Activated CD4-positive, alpha-beta memory T cell treated with anti-CD3 and anti-CD28 coated beads, Interleukin-2, amount 10 ng/mL, durations not matched to agents 7 days and 5 days (primary cell): ENCODE measurements at regions of chr6 and their contacts with region 1.

Region 1: DNA sequence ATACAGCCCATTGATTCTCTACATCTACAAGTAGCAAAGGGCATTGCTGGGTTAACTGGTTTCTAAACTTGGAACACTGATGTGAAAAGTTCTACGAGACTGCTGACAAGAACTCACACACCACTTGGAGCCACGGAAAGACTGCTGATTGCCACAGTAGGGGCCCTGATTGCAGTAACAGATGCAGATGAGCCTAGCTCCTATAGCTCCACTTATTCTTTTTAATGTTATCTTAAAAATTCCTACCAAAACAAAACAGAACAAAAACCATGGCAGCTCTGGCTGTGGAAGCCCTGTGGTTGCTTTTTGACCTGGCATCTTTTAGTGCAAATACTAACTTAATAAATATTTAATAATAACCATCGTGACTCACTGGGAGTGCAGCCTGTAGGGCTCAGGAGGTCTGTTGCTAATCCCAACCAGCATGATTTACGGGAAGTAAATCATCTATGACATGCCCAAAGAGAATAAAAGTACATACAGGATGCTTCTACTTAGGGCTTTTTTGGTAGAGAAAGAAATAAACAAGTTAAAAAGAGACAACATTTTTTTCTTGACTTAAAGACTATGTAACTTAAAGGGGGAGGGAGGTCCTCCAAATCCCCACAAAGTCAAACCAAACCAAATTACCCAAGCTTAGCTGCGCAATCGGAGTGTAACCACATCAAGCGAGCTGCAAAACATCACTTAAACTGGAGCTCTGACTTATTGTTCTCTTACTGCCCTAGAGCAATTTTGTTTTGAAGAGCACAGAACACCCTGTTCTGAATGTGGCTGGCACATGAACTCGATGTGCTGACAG is 87.2 kb downstream of the FKBP5 start:
- DNase-seq: peak; percentile 58
- H3K4me3 Mint-ChIP-seq: peak overlapping the region; percentile 60
- H3K27ac Mint-ChIP-seq: peak overlapping the region; percentile 91
- H3K4me1 Mint-ChIP-seq: peaks cover 48% of the 10 kb centered on the region
- H3K27me3 Mint-ChIP-seq: no peaks in the 10 kb centered on the region

Region 2: GRCh38 chr6:35534407-35535170 is 66.9 kb before region 1 on chr6:
- CTCF ChIA-PET with region 1: no interaction called
- POLR2A ChIA-PET with region 1: no interaction called
- DNase-seq: no peak
- H3K4me3 Mint-ChIP-seq: no peak overlapping the region
- H3K27ac Mint-ChIP-seq: no peak overlapping the region
- H3K4me1 Mint-ChIP-seq: no peaks in the 10 kb centered on the region
- H3K27me3 Mint-ChIP-seq: peaks cover 13% of the 10 kb centered on the region

Region 3: DNA sequence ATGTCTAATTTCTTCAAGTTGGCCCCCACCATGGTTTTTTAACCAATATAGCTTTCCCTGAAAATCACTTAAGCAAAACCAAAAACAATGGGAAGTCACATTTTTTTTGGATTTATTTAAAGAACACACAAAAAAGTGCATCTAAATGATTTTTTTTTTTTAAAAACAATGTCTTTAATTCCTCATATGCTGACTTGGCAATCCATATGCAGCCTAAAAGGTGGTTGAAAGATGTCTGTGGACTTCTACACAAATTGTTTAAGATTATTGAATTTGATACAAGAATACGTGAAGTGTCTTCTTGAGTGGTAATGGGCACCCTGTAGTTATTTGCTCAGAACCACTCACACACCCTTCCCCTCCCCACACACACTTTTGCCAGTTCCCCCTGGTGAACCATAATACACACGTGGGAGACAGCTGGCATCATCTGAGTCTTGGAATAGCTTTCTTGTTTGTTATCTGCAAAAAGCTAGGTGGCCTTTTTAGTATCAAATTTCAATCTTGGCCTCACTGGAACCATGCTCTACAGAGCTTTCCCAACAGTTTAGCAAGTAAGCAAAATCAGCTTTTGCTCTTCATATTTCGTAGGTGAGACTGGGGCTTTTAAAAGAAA is 27.9 kb before region 1 on chr6:
- CTCF ChIA-PET with region 1: no interaction called
- POLR2A ChIA-PET with region 1: no interaction called
- DNase-seq: no peak
- H3K4me3 Mint-ChIP-seq: no peak overlapping the region
- H3K27ac Mint-ChIP-seq: no peak overlapping the region
- H3K4me1 Mint-ChIP-seq: no peaks in the 10 kb centered on the region
- H3K27me3 Mint-ChIP-seq: no peaks in the 10 kb centered on the region

Region 4: DNA sequence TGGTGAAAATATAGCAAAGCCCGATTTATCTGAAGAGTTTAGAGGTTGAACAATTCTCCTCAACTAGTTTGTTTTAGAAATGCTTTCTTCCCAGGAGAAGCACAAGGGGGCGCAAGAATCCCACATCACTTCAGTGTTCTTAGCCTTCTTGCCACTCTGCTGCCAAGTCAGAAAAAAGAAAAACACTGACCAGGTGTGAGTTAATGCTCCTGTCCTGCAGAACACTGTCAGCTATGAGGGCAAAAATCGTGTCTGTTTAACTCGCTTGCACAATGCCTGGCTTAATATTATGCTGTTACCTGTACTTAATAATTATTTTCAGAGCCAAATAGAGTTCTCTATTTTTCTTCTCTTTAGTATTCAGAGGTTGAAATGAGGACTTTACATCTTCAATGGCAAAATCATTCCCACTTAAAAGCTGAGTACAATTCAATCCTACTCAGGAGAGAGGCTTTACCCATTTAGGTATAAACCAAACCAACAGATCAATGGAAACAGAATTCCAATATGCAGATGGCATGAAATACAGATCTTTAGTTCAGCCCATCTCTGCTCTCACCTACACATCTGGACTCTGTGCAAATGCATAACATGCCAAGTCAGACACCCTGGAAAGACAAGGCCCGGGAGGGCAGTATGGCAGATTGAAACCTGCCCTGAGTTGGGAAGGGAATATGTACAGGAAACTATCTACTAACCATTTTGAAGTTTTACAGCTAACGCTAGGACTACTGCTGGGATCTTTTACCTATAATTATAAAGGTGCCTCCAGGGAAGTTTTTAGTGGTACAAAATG is 17.4 kb before region 1 on chr6:
- CTCF ChIA-PET with region 1: interaction called, 10 read pairs
- POLR2A ChIA-PET with region 1: no interaction called
- DNase-seq: peak; percentile 77
- H3K4me3 Mint-ChIP-seq: no peak overlapping the region
- H3K27ac Mint-ChIP-seq: no peak overlapping the region
- H3K4me1 Mint-ChIP-seq: peaks cover 15% of the 10 kb centered on the region
- H3K27me3 Mint-ChIP-seq: no peaks in the 10 kb centered on the region

Region 5: GRCh38 chr6:35590622-35591066 is 10.9 kb before region 1 on chr6:
- CTCF ChIA-PET with region 1: interaction called, 8 read pairs
- POLR2A ChIA-PET with region 1: interaction called, 23 read pairs
- DNase-seq: no peak
- H3K4me3 Mint-ChIP-seq: no peak overlapping the region
- H3K27ac Mint-ChIP-seq: peak overlapping the region; percentile 16
- H3K4me1 Mint-ChIP-seq: peaks cover 28% of the 10 kb centered on the region
- H3K27me3 Mint-ChIP-seq: no peaks in the 10 kb centered on the region

Region 6: GRCh38 chr6:35624341-35625070 is 23.0 kb after region 1 on chr6:
- CTCF ChIA-PET with region 1: interaction called, 16 read pairs
- POLR2A ChIA-PET with region 1: interaction called, 10 read pairs
- DNase-seq: no peak
- H3K4me3 Mint-ChIP-seq: no peak overlapping the region
- H3K27ac Mint-ChIP-seq: peak overlapping the region; percentile 1
- H3K4me1 Mint-ChIP-seq: peaks cover 6% of the 10 kb centered on the region
- H3K27me3 Mint-ChIP-seq: no peaks in the 10 kb centered on the region

Region 7: GRCh38 chr6:35669451-35670045 is 68.0 kb after region 1 on chr6:
- CTCF ChIA-PET with region 1: no interaction called
- POLR2A ChIA-PET with region 1: interaction called, 13 read pairs
- DNase-seq: no peak
- H3K4me3 Mint-ChIP-seq: peak overlapping the region; percentile 75
- H3K27ac Mint-ChIP-seq: peak overlapping the region; percentile 90
- H3K4me1 Mint-ChIP-seq: peaks cover 56% of the 10 kb centered on the region
- H3K27me3 Mint-ChIP-seq: no peaks in the 10 kb centered on the region